Heart left ventricle (tissue), 16 donors: ENCODE measurements at regions of chr13 and their contacts with region 1.

Region 1: DNA sequence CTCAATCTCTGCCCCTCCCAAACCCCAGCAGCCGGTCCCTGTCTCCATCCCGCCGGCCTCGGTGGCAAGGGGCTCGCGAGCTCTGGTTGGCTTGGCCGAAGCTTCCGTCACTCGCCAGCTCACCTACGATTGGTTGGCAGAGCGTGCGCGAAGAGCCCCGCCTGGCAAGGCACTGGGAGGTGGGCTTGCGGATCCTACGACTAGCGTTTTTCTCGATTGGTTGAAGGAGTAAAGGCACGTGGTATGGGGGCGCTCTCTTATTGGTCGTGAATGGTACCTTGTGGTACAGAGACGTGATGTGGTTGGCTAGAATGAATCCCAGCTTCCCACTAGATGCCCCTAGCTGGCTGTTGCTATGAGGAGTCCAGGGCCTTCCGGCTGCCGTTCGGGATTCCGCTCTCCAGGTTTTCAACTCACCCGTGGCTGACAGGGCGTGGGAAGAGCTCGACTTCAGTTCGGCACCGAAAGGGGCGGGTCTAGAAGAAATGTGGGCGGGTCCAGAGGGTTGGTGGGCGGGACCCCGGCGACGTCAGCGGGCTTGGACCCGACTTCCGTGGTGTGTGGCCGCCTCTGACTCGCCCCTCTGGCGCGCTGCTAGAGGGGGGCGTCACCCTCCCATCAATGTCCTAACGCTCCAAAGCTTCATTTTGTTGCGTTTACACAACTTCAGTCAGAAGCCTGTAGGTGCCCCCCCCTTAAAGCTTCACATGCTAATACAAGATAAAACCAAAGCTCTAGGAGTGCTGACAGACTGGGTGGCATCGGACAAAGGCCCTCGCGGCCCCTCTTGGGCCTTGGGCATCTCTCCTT is 847 bp upstream of the RAP2A start:
- DNase-seq: peak; percentile 99
- ATAC-seq: peak; percentile 92 to 96 (median 95)
- H3K4me3 ChIP-seq: peak overlapping the region; percentile 72 to 92 (median 87)
- H3K27ac ChIP-seq: peak overlapping the region; percentile 96 to 100 (median 99)
- H3K4me1 ChIP-seq: peaks cover 0 to 43% (median 28%) of the 10 kb centered on the region in 12 donors
- H3K27me3 ChIP-seq: no peaks in the 10 kb centered on the region
- CTCF ChIP-seq: no peak
- POLR2A ChIP-seq: peak in 1 of 2 donors; percentile 30

Region 2: DNA sequence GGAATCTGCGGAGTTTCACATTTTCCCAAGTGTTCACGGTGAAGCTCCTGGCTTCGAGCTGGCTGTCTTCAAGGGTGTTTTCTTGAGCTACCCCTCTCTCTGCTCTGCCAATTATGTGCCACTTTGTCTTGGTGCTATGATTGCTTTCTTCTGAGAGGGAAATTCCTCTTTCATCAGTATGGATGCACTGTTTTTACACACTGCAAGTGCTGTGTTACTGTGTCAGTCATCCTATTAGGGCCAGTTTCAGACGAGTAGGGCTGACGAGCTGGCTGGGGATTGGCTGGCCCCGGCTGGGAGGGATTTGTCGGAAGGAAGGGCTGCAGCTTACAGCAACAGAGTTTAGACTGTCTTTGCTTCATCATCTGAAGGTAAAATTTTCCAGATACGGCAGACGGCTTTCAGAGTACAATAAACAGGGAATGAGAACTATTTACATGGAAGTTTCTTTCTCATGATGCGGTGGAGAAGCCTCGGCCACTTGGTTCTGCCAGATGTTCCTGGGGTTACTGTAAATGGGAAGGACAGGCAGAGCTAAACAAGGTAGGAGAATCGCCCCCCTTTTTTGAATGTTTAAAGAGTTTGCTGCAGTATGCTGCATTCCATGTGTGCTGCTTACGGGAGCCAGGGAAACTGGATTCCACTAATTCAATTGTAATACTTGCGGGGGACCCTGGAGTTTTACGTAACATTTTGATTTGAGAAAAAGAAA is 211.0 kb before region 1 on chr13 and contains the start of gene MBNL2:
- intact Hi-C with region 1: loop called in 4 of 10 experiments (anchors 5 to 10 kb)
- DNase-seq: peak; percentile 91 to 93 (median 92)
- ATAC-seq: peak; percentile 93 to 98 (median 95)
- H3K4me3 ChIP-seq: peak within 1 kb of the TSS; percentile 47 to 81 (median 73)
- H3K27ac ChIP-seq: peak within 1 kb of the TSS; percentile 71 to 96 (median 90)
- H3K4me1 ChIP-seq: peaks cover 7 to 38% (median 29%) of the 10 kb centered on the region in 12 donors
- H3K27me3 ChIP-seq: no peaks in the 10 kb centered on the region
- CTCF ChIP-seq: no peak
- POLR2A ChIP-seq: peak in 1 of 2 donors; percentile 92
- total RNA-seq, gene MBNL2: 59.4 to 100 (median 83.1) TPM

Region 3: DNA sequence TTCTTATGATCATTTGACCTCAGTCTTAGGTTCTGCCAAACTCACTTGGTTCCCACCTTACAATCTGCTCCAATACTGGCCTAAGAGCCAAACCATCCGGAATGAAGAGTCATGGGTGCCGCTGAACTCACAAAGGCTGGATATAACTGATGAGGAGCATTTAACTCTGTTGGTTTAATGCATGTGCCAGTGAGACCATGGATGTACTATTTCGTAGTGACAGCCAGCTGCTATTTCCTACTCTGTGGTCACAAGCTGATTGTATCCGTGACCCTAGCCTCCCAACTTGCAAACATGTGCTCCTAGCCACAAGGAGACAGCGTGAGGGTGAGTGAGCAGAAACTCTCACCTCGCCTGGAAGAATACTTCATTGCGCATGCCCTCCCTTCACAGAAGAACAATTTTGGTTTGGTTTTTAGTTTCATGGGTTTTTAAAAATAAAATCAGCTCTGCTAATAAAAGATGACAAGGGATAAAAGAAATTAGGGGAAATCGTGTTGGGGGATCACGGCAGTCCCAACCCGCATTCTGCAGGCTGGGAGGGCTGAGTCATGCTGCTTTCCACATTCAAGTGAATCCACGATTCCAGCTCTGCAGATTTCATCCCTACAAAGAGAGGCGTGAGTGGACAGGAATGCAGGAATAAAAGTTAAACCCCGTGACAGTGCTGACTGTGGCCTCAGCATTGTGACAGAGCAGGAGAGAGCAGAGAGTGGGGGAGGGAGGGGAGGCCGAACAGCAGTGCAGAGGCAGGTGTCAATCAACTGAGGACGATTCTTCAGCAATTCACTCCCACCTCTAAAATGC is 65.9 kb before region 1 on chr13:
- intact Hi-C with region 1: loop called in 3 of 10 experiments (anchors 5 kb)
- DNase-seq: no peak
- ATAC-seq: peak in 3 of 4 donors; percentile 35 to 45 (median 37)
- H3K4me3 ChIP-seq: no peak overlapping the region
- H3K27ac ChIP-seq: peak overlapping the region in 2 of 12 donors; percentile 12 to 26
- H3K4me1 ChIP-seq: peaks cover 0 to 28% (median 5%) of the 10 kb centered on the region in 12 donors
- H3K27me3 ChIP-seq: no peaks in the 10 kb centered on the region
- CTCF ChIP-seq: no peak
- POLR2A ChIP-seq: no peak

Region 4: GRCh38 chr13:97379386-97379785 is 53.7 kb before region 1 on chr13:
- intact Hi-C with region 1: no loop called
- DNase-seq: no peak
- ATAC-seq: no peak
- H3K4me3 ChIP-seq: no peak overlapping the region
- H3K27ac ChIP-seq: no peak overlapping the region
- H3K4me1 ChIP-seq: peaks cover 0 to 18% (median under 1%) of the 10 kb centered on the region in 12 donors
- H3K27me3 ChIP-seq: no peaks in the 10 kb centered on the region
- CTCF ChIP-seq: no peak
- POLR2A ChIP-seq: no peak

Region 5: DNA sequence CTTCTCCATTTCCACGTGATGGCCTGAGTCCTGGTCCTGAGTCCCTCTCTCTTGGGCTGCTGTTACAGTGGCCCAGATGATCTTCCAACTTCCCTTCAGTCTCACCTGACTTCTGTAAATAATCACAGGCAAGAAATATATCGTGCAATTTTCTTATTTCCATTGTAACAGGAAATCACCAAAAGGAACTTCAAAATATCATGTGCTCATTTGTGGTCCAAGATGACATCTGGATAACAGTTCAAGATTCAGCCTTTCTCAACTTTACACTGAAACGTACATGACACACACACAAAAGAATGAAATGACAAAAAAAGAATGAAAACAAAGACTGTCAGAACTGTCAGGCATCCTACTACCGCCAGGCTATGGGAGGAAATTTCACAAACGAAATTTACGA is 21.1 kb before region 1 on chr13:
- intact Hi-C with region 1: no loop called
- DNase-seq: no peak
- ATAC-seq: peak in 1 of 4 donors; percentile 57
- H3K4me3 ChIP-seq: no peak overlapping the region
- H3K27ac ChIP-seq: peak overlapping the region in 5 of 12 donors; percentile 6 to 50 (median 33)
- H3K4me1 ChIP-seq: peaks cover 0 to 12% (median 1%) of the 10 kb centered on the region in 12 donors
- H3K27me3 ChIP-seq: no peaks in the 10 kb centered on the region
- CTCF ChIP-seq: no peak
- POLR2A ChIP-seq: no peak

Region 6: DNA sequence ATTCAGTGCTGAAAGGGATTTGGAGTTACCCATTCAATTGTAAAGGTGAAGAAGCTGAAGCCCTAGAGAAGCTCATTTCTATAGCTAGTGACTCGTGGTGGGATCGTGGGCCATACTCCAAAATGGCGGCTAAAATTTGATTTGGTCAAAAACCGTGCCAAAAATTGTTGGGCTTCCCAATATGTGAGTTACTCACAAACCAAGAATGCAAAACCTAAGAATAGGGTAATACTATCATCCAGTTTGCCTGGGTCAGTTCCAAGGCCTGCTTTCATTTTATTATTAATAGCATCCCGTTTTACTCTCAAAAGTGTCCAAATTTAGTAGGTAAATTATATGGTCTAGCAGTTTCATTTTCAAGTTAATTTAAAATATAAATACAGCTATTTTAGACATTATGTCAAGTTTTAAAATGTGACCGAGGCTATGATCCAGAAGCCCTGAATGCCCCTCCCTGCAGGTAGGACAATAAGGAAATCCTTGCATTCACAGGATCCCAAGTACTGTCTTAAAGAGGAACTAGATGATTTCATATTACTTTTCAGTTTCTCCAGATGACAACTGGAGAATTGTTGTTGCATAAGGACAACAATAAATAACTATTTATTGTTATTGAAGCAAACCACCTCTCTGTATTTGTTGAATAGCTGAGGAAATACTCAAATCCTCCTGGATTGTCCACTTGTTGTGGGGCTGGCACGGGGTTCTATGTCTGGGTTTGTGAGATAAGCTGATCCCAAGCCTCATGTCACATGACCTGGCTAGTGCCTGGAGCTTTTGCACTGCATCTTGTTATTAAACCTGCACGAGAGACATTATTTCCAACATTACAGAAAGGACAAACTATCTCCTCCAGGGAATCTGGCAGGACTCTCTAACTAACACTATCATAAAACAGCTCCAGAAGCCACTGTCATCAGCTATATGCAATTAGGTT is 10.7 kb before region 1 on chr13:
- intact Hi-C with region 1: no loop called
- DNase-seq: peak in 1 of 5 donors; percentile 10
- ATAC-seq: peak in 2 of 4 donors; percentile 50 to 62
- H3K4me3 ChIP-seq: peak overlapping the region in 1 of 12 donors; percentile 2
- H3K27ac ChIP-seq: peak overlapping the region in 10 of 12 donors; percentile 3 to 63 (median 38)
- H3K4me1 ChIP-seq: peaks cover 0 to 21% (median 13%) of the 10 kb centered on the region in 12 donors
- H3K27me3 ChIP-seq: no peaks in the 10 kb centered on the region
- CTCF ChIP-seq: no peak
- POLR2A ChIP-seq: no peak

Region 7: GRCh38 chr13:97567510-97568243 is 134.6 kb after region 1 on chr13:
- intact Hi-C with region 1: loop called in 1 of 10 experiments (anchors 10 kb)
- DNase-seq: no peak
- ATAC-seq: peak in 2 of 4 donors; percentile 36 to 48
- H3K4me3 ChIP-seq: no peak overlapping the region
- H3K27ac ChIP-seq: no peak overlapping the region
- H3K4me1 ChIP-seq: peaks cover 0 to 14% (median 4%) of the 10 kb centered on the region in 12 donors
- H3K27me3 ChIP-seq: peaks cover 0 to 6% (median 0%) of the 10 kb centered on the region in 9 donors
- CTCF ChIP-seq: no peak
- POLR2A ChIP-seq: no peak

Region 8: DNA sequence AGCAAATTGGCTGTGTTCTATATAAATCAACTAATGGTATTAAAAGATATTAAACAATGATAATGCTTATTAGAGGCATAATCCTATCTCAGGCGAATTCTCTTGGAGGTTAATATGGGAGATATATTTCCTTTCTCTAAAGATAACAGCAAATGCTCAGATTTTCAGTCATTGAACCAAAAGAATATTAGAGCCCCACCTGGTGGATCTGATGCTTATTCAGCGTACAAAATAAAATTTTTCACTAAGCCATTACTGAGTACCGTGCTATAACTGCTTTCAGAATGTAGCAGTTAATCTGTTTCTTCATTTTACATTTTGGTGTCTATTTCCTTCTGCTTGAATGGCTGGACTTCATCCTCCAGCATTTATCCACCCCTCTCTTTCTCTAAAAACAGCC is 377.0 kb after region 1 on chr13:
- intact Hi-C with region 1: loop called in 2 of 10 experiments (anchors 10 kb)
- DNase-seq: no peak
- ATAC-seq: no peak
- H3K4me3 ChIP-seq: no peak overlapping the region
- H3K27ac ChIP-seq: no peak overlapping the region
- H3K4me1 ChIP-seq: no peaks in the 10 kb centered on the region
- H3K27me3 ChIP-seq: no peaks in the 10 kb centered on the region
- CTCF ChIP-seq: peak in 10 of 12 donors; percentile 15 to 54 (median 34)
- POLR2A ChIP-seq: no peak